A673 (cell line): ENCODE measurements at regions of chr18 and their contacts with region 1.

Region 1: GRCh38 chr18:11700876-11701275 is 11.8 kb downstream of the GNAL start:
- DNase-seq: no peak
- H3K4me3 ChIP-seq: no peak overlapping the region
- H3K27ac ChIP-seq: no peak overlapping the region
- H3K4me1 ChIP-seq: no peaks in the 10 kb centered on the region
- H3K27me3 ChIP-seq: peaks cover 50% of the 10 kb centered on the region
- CTCF ChIP-seq: no peak

Region 2: GRCh38 chr18:11714244-11714918 is 13.5 kb after region 1 on chr18:
- CTCF ChIA-PET with region 1: no interaction called
- POLR2A ChIA-PET with region 1: no interaction called
- intact Hi-C with region 1: loop called (anchors 1 kb)
- DNase-seq: no peak
- H3K4me3 ChIP-seq: no peak overlapping the region
- H3K27ac ChIP-seq: no peak overlapping the region
- H3K4me1 ChIP-seq: no peaks in the 10 kb centered on the region
- H3K27me3 ChIP-seq: peaks cover 23% of the 10 kb centered on the region
- CTCF ChIP-seq: no peak